ENCODE measurements at regions of chr2 and their contacts with region 1.

Region 1: DNA sequence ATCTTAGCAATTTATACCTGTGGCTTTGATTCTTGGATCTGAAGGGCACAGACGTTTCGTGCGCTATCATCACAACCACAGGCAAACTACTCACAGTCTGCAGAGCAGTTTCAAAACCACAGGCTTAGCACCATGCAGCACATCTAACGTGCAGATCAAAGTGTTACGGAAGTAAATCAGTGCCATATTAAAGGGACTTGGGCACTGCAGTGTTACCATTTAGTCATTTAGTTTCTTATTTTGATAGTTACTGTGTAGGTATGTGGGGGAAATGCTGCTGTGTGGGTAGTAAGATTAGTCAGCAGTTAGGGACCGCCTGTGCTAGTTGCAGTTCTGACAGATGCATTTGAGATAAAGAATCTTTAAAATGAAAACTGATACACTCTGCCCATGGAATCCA is 384.0 kb downstream of the NBAS start:
- DNase-seq: peak; percentile 69
- H3K4me3 Mint-ChIP-seq: no peak overlapping the region
- H3K27ac Mint-ChIP-seq: peak overlapping the region; percentile 69
- H3K4me1 Mint-ChIP-seq: peaks cover 46% of the 10 kb centered on the region
- H3K27me3 Mint-ChIP-seq: peaks cover 34% of the 10 kb centered on the region

Region 2: DNA sequence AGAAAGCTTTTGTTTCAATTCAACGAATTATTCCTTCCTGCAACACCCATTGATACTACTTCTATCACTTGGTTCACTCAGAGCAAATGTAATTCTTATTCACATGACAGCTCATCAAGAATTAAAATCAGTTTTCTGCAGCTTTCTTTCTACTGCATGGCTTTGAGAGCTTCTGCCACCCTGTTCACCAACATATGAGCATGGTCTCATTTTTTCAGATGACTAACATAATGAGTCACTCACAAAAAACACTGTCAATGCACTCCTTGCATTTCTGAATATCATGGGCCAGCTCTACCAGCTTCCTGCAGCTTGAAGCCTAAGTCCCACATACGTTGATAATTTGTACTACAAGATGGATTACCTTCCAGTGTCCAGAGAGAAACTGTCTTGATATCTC is 201.7 kb before region 1 on chr2:
- intact Hi-C with region 1: no loop called
- DNase-seq: no peak
- H3K4me3 Mint-ChIP-seq: no peak overlapping the region
- H3K27ac Mint-ChIP-seq: no peak overlapping the region
- H3K4me1 Mint-ChIP-seq: peaks cover 2% of the 10 kb centered on the region
- H3K27me3 Mint-ChIP-seq: no peaks in the 10 kb centered on the region

Region 3: DNA sequence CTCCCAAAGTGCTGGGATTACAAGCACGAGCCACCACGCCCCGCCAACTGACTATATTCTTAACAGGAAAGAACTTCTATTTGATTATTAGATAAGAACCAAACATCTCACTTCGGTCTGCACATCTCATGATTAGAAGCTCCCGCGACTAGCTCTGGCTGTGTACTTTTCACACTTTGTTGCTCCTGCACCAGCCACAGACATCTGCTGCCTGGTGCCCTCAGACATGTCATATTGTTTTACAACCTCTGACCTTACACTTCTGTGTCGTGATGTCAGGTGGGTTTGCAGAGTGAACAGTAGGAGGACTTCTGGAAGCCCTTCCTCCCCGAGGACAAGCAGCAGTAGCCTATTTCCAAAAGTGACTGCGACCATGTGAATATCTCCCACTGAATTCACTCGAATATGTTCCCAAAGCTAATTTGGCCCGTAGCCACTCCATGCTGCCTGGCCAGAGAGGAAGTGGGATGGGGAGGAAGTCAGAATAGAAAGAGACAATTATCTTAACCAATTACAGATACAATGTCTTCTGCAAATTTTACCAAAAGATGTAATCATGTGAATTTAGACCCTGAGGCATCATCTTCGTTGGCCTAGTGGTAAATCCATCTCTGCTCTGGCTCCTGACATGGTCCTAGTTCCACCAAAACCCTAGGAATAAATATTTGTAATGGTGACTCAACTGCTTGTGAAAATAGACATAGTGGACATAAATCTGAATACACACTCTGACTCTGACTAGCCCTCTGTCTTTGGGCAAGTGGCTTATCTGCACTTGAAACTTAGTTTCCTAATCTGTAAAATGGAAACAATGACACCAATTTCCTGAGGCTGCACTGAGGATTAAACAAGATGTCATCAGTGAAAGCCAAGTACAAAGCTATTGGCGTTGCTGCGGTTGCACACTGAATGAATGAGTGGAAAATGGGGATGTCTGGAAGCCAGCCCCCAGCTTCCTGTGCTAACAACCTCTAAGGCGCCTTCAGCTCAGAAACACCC is 138.4 kb before region 1 on chr2:
- intact Hi-C with region 1: loop called (anchors 1 kb)
- DNase-seq: no peak
- H3K4me3 Mint-ChIP-seq: no peak overlapping the region
- H3K27ac Mint-ChIP-seq: peak overlapping the region; percentile 28
- H3K4me1 Mint-ChIP-seq: peaks cover 12% of the 10 kb centered on the region
- H3K27me3 Mint-ChIP-seq: peaks cover 3% of the 10 kb centered on the region

Region 4: GRCh38 chr2:15205562-15205961 is 28.5 kb after region 1 on chr2:
- intact Hi-C with region 1: no loop called
- DNase-seq: no peak
- H3K4me3 Mint-ChIP-seq: no peak overlapping the region
- H3K27ac Mint-ChIP-seq: no peak overlapping the region
- H3K4me1 Mint-ChIP-seq: peaks cover 19% of the 10 kb centered on the region
- H3K27me3 Mint-ChIP-seq: no peaks in the 10 kb centered on the region

Region 5: GRCh38 chr2:15313657-15314056 is 136.6 kb after region 1 on chr2:
- intact Hi-C with region 1: loop called (anchors 5 kb)
- DNase-seq: no peak
- H3K4me3 Mint-ChIP-seq: no peak overlapping the region
- H3K27ac Mint-ChIP-seq: no peak overlapping the region
- H3K4me1 Mint-ChIP-seq: peaks cover 68% of the 10 kb centered on the region
- H3K27me3 Mint-ChIP-seq: no peaks in the 10 kb centered on the region

Region 6: GRCh38 chr2:15560988-15561573 is 384.0 kb after region 1 on chr2 and contains the start of gene NBAS:
- intact Hi-C with region 1: loop called (anchors 1 kb)
- DNase-seq: peak; percentile 66
- H3K4me3 Mint-ChIP-seq: peak within 1 kb of the TSS; percentile 99
- H3K27ac Mint-ChIP-seq: peak within 1 kb of the TSS; percentile 92
- H3K4me1 Mint-ChIP-seq: peaks cover 33% of the 10 kb centered on the region
- H3K27me3 Mint-ChIP-seq: peaks cover 14% of the 10 kb centered on the region
- total RNA-seq, gene NBAS: 37.2 and 38.7 TPM in 2 replicates

Region 7: GRCh38 chr2:15591692-15592463 is 414.8 kb after region 1 on chr2 and contains the start of gene DDX1:
- intact Hi-C with region 1: loop called (anchors 2 kb)
- DNase-seq: peak; percentile 82
- H3K4me3 Mint-ChIP-seq: peak within 1 kb of the TSS; percentile 90
- H3K27ac Mint-ChIP-seq: peak within 1 kb of the TSS; percentile 94
- H3K4me1 Mint-ChIP-seq: peaks cover 21% of the 10 kb centered on the region
- H3K27me3 Mint-ChIP-seq: no peaks in the 10 kb centered on the region
- total RNA-seq, gene DDX1: 100.0 and 111 TPM in 2 replicates